ENCODE measurements at regions of chr11 and their contacts with region 1.

Region 1: DNA sequence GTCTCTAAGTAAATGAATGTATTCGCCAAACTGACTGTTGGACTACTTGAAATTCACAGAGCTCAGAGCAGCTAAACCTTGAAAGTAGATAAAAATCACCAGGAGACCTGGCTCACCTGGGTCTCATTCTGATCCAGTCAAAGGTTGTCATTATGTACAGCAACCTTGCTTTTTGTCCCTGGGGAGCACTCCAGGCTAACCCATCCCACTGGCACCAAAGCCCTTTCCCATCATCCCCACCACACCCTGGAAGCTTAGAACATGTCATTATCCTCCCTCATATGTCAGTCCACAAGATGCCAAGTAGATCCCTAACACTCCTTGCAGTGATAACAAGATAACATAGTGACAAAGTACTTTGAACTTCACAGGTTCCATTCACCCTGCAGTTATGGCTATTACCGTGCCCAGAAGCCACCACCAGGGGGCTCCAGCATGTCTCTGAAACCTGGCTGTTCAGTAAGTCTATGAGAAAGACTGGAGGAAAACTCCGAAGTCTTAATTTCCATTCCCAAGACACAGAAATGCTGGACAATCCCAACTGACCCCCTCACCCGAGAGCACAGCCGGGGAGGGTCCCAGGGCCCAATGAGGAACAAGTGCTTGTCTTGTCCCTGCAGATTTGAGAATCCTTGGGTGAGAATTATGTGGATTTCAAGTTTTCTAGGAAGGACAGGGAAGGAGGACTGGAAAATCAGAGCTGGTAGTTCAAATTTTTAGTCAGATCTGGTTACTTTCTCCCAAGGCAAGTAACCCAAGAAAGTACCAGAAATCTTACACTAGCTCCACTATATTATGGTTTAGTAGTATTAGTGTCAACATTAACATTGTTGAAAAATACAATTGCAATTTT is 43.0 kb upstream of the USP47 start:
- DNase-seq: peak; percentile 90
- ATAC-seq: peak; percentile 82
- H3K4me3 Mint-ChIP-seq: no peak overlapping the region
- H3K27ac Mint-ChIP-seq: no peak overlapping the region
- H3K4me1 Mint-ChIP-seq: no peaks in the 10 kb centered on the region
- H3K27me3 Mint-ChIP-seq: peaks cover 19% of the 10 kb centered on the region
- CTCF ChIP-seq: peak; percentile 83

Region 2: DNA sequence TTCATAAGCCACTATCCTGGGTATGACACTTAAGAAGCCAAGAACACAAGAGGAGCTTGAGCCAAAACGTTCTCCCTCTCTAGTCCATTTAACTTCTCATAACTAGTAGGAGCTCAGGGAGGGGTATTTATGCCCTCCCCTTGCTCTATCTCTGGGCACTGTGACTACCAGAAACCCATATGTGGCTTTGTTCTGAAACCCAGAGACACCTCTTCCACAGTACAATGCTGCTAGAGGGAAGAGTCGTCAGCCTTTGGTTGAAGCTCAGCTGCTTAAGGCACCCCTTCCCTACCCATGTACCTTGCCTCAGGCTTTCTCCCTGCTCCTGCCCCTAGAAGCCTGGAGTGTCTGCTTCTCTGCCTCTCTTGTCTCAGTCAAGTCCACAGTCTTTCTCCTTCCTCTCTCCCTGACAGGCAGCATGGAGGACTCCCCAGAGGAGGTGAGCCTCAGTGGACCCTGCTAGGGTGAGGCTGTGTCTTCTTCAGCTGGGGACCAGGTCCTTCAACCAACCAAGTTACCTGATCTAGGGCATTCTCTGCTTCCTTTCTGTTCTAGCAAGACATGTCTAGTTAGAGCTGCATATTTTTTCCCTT is 19.8 kb after region 1 on chr11:
- CTCF ChIA-PET with region 1: interaction called, 18 read pairs
- POLR2A ChIA-PET with region 1: no interaction called
- intact Hi-C with region 1: no loop called
- DNase-seq: no peak
- ATAC-seq: no peak
- H3K4me3 Mint-ChIP-seq: no peak overlapping the region
- H3K27ac Mint-ChIP-seq: no peak overlapping the region
- H3K4me1 Mint-ChIP-seq: no peaks in the 10 kb centered on the region
- H3K27me3 Mint-ChIP-seq: peaks cover 6% of the 10 kb centered on the region
- CTCF ChIP-seq: no peak

Region 3: GRCh38 chr11:11848891-11849746 is 50.3 kb after region 1 on chr11:
- CTCF ChIA-PET with region 1: interaction called, 13 read pairs
- POLR2A ChIA-PET with region 1: interaction called, 4 read pairs
- intact Hi-C with region 1: loop called (anchors 5 kb)
- DNase-seq: peak; percentile 78
- ATAC-seq: peak; percentile 82
- H3K4me3 Mint-ChIP-seq: peak overlapping the region; percentile 31
- H3K27ac Mint-ChIP-seq: peak overlapping the region; percentile 71
- H3K4me1 Mint-ChIP-seq: peaks cover 81% of the 10 kb centered on the region
- H3K27me3 Mint-ChIP-seq: no peaks in the 10 kb centered on the region
- CTCF ChIP-seq: peak; percentile 79

Region 4: DNA sequence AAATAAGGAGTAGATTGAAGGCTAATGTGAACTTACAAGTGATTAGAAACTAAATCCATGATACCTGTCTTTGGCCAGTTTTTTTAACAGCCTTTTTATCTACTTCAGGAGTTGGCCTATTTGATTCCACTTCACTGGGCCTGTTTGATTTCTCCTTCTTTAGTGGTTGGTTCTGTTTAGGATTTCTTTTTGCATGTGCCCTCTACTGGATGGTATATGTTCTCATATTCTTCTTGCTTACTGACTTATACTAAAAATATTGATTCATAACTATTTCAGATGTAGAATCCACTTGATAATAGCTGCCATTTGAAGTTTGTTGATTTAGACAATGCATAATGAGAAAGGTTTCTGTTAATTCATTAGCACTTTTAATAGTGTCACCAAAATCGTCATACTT is 96.9 kb after region 1 on chr11:
- CTCF ChIA-PET with region 1: interaction called, 13 read pairs
- POLR2A ChIA-PET with region 1: no interaction called
- intact Hi-C with region 1: no loop called
- DNase-seq: no peak
- ATAC-seq: no peak
- H3K4me3 Mint-ChIP-seq: no peak overlapping the region
- H3K27ac Mint-ChIP-seq: no peak overlapping the region
- H3K4me1 Mint-ChIP-seq: peaks cover 7% of the 10 kb centered on the region
- H3K27me3 Mint-ChIP-seq: no peaks in the 10 kb centered on the region
- CTCF ChIP-seq: no peak

Region 5: DNA sequence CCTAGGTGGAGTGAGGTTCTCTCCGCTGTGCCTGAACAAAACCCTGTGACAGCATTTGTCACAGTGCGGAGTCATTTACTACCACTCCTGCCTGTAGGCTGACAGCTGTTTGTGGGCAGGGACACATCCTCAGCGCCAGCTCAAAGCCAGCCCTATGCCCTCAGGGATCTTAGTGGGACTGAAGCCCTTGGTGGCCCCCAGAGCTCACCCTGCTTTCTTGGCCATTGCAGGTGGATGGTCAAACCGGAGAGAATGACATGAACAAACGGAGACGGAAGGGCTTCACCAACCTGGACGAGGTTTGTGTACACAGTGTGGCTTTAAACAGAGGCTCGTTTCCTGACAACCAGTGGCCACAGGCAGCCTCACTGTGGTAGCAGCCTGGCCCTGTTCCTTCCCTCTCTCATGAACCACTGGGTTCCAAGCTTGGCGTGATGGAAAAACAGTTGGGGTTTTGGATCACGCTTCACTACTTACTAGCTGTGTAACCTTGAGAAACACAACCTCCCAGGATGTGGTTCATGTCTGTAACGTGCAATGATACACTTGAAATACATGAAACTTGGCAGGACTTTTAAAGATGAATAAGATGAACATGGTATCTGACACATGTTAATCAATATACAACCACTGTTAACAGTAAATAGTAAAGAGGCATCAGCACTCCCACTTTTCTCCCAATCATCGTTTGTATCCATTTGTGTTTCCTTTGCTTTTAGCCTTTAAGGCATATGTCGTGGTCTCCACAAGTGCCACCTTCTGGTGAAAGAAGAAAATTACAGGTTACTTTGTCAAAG is 437.3 kb after region 1 on chr11:
- CTCF ChIA-PET with region 1: no interaction called
- POLR2A ChIA-PET with region 1: no interaction called
- intact Hi-C with region 1: no loop called
- DNase-seq: peak; percentile 86
- ATAC-seq: peak; percentile 86
- H3K4me3 Mint-ChIP-seq: peak overlapping the region; percentile 36
- H3K27ac Mint-ChIP-seq: peak overlapping the region; percentile 92
- H3K4me1 Mint-ChIP-seq: peaks cover 30% of the 10 kb centered on the region
- H3K27me3 Mint-ChIP-seq: no peaks in the 10 kb centered on the region
- CTCF ChIP-seq: peak; percentile 91

Measured in activated CD8-positive, alpha-beta T cell treated with anti-CD3 and anti-CD28 coated beads for 36 hours (primary cell).